Right ventricle myocardium inferior (tissue), 1 donor: ENCODE measurements at regions of chr14 and their contacts with region 1.

Region 1: DNA sequence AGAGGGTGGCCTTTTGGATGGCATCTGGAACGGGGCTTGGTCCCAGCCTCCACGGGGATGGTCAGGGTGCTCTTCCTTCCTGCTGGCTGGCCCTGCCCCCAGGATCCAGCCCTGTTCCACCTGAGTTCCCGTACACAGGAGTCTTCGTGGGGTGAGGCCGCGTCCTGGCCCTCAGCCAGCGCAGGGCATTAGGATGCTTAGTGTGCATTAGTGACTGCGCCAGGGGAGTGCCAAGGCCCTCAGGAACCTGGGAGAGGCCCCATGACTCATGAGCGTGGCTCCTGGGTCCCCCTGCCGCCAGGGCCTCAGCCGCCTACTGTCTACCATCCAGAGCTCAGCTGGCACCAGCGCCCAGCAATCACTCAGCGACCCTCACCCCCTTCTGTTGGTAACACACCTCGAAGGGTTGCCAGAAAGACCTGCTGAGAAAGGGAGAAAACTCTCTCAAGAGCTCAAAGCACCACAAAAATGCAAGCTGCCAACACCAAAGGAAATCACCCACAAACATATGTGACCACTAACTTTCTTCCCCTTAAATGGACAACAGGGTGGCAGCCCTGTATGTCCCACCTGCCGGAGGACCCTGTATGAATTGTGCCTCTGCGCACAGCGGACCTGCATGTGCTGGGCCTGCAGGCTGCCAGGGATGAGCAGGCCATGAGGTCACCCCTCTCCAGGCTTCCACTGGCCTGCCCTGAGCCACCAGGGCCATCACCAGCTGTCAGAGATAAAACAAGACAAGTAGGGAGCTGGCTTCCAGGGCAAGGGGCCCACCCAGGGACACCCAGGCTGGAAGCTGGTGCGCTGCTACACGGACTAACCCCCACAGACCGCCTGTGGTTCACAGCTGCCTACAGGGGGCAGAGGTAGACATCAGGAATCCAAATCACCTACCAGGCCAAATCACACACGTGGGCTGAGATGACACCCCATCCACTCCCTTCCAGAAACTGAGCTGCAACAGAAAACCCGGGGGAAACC is 28.7 kb downstream of the CCDC85C start:
- DNase-seq: no peak
- ATAC-seq: peak; percentile 12

Region 2: DNA sequence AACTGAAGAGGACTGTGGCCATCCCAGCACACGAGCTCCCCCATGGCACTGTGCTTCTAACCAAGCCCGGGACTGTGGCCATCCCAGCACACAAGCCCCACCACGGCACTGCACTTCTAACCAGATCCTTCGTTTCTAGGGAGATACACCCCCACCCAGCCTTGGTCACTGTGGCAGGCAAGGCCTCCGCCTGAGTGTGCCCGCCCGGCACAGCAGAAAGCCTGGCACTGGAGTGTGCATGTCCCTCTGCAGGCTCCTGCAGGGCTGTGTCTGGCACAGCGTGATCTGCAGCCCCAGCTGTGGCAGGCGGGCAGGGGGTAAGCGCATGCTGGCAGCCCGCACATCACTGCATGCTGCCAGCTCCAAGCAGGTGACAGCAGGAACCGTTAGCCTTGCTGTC is 21.1 kb before region 1 on chr14:
- intact Hi-C with region 1: loop called (anchors 2 kb)
- DNase-seq: no peak
- ATAC-seq: peak; percentile 79

Region 3: GRCh38 chr14:99595034-99595433 is 19.7 kb after region 1 on chr14:
- intact Hi-C with region 1: loop called (anchors 2 kb)
- DNase-seq: peak; percentile 49
- ATAC-seq: no peak